PC-3 (cell line): ENCODE measurements at regions of chr1 and their contacts with region 1.

Region 1: GRCh38 chr1:221543529-221544120 is 198.3 kb downstream of the DUSP10 start:
- DNase-seq: peak; percentile 60
- ATAC-seq: peak; percentile 48; the same call in 1 of the 2 replicates
- H3K4me3 ChIP-seq: no peak overlapping the region
- H3K27ac ChIP-seq: no peak overlapping the region
- H3K4me1 ChIP-seq: peaks cover 5% of the 10 kb centered on the region; the same call in 1 of the 2 replicates
- H3K27me3 ChIP-seq: no peaks in the 10 kb centered on the region
- CTCF ChIP-seq: peak; percentile 87

Region 2: GRCh38 chr1:221394011-221394544 is 149.5 kb before region 1 on chr1:
- CTCF ChIA-PET with region 1: no interaction called
- POLR2A ChIA-PET with region 1: no interaction called
- intact Hi-C with region 1: no loop called
- DNase-seq: peak; percentile 86
- ATAC-seq: peak; percentile 55
- H3K4me3 ChIP-seq: no peak overlapping the region
- H3K27ac ChIP-seq: peak overlapping the region; percentile 88
- H3K4me1 ChIP-seq: peaks cover 38% of the 10 kb centered on the region
- H3K27me3 ChIP-seq: no peaks in the 10 kb centered on the region
- CTCF ChIP-seq: no peak

Region 3: GRCh38 chr1:221594576-221594975 is 51.0 kb after region 1 on chr1:
- CTCF ChIA-PET with region 1: no interaction called
- POLR2A ChIA-PET with region 1: no interaction called
- intact Hi-C with region 1: no loop called
- DNase-seq: no peak
- ATAC-seq: no peak
- H3K4me3 ChIP-seq: no peak overlapping the region
- H3K27ac ChIP-seq: no peak overlapping the region
- H3K4me1 ChIP-seq: no peaks in the 10 kb centered on the region
- H3K27me3 ChIP-seq: no peaks in the 10 kb centered on the region
- CTCF ChIP-seq: no peak

Region 4: GRCh38 chr1:221725735-221726672 is 182.4 kb after region 1 on chr1:
- CTCF ChIA-PET with region 1: interaction called, 3 read pairs
- POLR2A ChIA-PET with region 1: no interaction called
- intact Hi-C with region 1: loop called (anchors 5 kb)
- DNase-seq: peak; percentile 82
- ATAC-seq: peak; percentile 94
- H3K4me3 ChIP-seq: no peak overlapping the region
- H3K27ac ChIP-seq: peak overlapping the region; percentile 14
- H3K4me1 ChIP-seq: peaks cover 19% of the 10 kb centered on the region
- H3K27me3 ChIP-seq: no peaks in the 10 kb centered on the region
- CTCF ChIP-seq: no peak